ENCODE measurements at regions of chr7 and their contacts with region 1.

Region 1: GRCh38 chr7:3042861-3043489 is 692 bp downstream of the CARD11 start:
- DNase-seq: peak; percentile 86
- H3K4me3 ChIP-seq: peak overlapping the region; percentile 82
- H3K27ac ChIP-seq: peak overlapping the region; percentile 52
- H3K4me1 ChIP-seq: peaks cover 33% of the 10 kb centered on the region
- CTCF ChIP-seq: no peak

Region 2: DNA sequence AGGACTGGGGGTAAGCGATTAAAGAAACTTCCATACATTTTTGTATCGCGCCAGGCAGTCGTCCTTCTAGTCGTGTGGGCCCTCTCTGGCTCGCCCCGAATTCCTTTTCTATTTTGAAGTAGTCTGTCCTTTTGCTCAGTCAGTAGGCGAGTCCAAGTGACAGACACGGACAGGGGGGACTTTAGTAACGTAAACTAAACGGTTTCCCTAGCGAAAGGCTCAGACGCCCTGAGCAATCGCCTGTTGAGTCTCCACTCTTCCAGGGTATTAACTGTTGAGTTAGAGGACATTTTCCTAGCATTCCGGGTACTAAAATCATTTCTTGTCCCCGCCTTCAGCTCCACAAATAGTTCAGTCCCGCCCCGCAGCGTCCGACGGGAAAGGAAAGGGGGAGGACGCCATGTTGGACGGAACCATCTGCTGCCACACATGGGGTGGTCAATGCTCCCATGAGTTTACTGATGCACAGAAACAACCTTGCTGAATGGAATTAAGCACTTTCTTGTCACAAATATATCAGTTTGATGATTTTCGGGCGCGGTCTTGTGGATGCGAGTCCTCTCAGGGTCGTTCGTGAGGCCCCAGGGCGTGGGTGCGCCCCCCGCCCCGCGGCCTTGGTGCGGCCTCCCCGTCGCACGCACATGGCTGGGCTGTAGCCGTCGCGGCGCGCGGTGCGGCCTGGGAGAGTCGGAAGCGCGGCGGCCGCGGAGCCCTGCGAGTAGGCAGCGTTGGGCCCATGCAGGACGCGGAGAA is 688.6 kb before region 1 on chr7 and contains the start of gene EIF3B:
- CTCF ChIA-PET with region 1: no interaction called
- POLR2A ChIA-PET with region 1: no interaction called
- intact Hi-C with region 1: no loop called
- DNase-seq: peak; percentile 97
- H3K4me3 ChIP-seq: peak within 1 kb of the TSS; percentile 91
- H3K27ac ChIP-seq: peak within 1 kb of the TSS; percentile 79
- H3K4me1 ChIP-seq: peaks cover 20% of the 10 kb centered on the region
- CTCF ChIP-seq: no peak
- total RNA-seq, gene EIF3B: 181 and 241 TPM in 2 replicates

Region 3: GRCh38 chr7:2886900-2887299 is 156.1 kb before region 1 on chr7:
- CTCF ChIA-PET with region 1: no interaction called
- POLR2A ChIA-PET with region 1: no interaction called
- intact Hi-C with region 1: loop called (anchors 2 kb)
- DNase-seq: peak; percentile 84
- H3K4me3 ChIP-seq: no peak overlapping the region
- H3K27ac ChIP-seq: no peak overlapping the region
- H3K4me1 ChIP-seq: peaks cover 27% of the 10 kb centered on the region
- CTCF ChIP-seq: peak; percentile 95

Region 4: GRCh38 chr7:2978403-2978802 is 64.6 kb before region 1 on chr7:
- CTCF ChIA-PET with region 1: no interaction called
- POLR2A ChIA-PET with region 1: interaction called, 5 read pairs
- intact Hi-C with region 1: loop called (anchors 1 kb)
- DNase-seq: peak; percentile 94
- H3K4me3 ChIP-seq: peak overlapping the region; percentile 73
- H3K27ac ChIP-seq: peak overlapping the region; percentile 90
- H3K4me1 ChIP-seq: peaks cover 66% of the 10 kb centered on the region
- CTCF ChIP-seq: no peak

Region 5: DNA sequence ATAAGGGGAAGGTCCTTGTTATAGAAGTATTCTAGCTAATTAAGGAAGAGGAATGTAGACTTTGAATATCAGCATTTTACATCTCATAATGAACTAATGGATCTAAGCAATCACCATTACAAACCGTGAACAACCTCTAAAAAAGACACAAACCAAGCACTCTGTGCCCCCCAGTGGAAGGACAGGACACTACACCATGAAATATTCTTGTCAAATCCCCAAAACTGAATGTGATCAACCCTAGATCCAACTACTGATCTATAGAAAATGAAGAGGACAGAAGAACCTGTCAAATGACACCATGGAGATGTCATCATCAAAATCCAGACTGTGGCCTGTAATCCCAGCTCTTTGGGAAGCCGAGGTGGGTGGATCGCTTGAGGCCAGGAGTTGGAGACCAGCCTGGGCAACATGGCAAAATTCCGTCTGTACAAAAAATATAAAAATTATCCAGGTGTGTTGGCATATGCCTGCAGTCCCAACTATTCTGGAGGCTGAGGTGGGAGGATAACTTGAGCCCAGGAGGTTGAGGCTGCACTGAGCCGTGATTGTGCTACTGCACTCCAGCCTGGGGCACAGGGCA is 112.0 kb after region 1 on chr7:
- CTCF ChIA-PET with region 1: no interaction called
- POLR2A ChIA-PET with region 1: no interaction called
- intact Hi-C with region 1: no loop called
- DNase-seq: peak; percentile 76
- H3K4me3 ChIP-seq: no peak overlapping the region
- H3K27ac ChIP-seq: no peak overlapping the region
- H3K4me1 ChIP-seq: peaks cover 40% of the 10 kb centered on the region
- CTCF ChIP-seq: peak; percentile 94

Measured in OCI-LY7 (cell line).